ENCODE measurements at regions of chr22 and their contacts with region 1.

Region 1: DNA sequence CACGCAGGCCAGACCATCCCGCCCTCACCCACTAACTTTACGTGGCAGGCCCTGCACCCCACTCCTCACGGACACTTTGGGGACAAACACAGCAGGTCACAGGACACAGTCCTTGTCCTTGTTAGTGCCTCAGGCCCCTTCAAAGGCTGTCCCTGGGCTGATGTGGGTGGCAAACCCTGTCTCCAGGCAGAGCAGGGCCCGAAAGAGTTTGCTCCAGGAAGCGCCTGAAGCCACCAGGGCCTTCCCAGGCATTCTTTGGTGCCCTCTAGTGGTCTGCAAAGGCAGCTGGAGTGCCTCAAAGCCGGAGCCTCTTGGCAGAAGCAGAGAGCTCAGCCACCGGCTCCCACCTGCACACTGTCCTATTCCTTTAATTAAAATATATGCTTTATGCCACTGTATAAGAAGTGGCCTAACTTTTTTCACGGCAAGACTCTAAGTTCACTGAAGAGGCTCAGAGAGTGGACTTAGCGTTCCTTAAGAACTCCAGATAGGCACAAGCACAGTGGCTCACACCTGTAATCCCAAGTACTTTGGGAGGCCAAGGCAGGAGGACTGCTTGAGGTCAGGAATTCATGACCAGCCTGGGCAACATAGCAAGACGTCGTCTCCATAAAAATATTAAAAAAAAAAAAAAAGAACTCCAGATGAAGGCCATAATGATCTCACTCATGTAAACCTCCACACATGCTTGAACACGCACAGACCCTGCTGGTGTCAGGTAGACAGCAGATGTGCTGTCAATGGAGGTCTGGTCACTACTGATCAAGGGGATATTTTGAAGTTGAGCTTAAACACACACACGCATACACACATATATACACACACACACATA is 11.1 kb downstream of the TXN2 start:
- DNase-seq: peak; percentile 86
- CTCF ChIP-seq: peak; percentile 95

Region 2: GRCh38 chr22:36291831-36292740 is 178.3 kb before region 1 on chr22:
- CTCF ChIA-PET with region 1: interaction called, 233 read pairs
- POLR2A ChIA-PET with region 1: no interaction called
- DNase-seq: no peak
- CTCF ChIP-seq: no peak

Region 3: DNA sequence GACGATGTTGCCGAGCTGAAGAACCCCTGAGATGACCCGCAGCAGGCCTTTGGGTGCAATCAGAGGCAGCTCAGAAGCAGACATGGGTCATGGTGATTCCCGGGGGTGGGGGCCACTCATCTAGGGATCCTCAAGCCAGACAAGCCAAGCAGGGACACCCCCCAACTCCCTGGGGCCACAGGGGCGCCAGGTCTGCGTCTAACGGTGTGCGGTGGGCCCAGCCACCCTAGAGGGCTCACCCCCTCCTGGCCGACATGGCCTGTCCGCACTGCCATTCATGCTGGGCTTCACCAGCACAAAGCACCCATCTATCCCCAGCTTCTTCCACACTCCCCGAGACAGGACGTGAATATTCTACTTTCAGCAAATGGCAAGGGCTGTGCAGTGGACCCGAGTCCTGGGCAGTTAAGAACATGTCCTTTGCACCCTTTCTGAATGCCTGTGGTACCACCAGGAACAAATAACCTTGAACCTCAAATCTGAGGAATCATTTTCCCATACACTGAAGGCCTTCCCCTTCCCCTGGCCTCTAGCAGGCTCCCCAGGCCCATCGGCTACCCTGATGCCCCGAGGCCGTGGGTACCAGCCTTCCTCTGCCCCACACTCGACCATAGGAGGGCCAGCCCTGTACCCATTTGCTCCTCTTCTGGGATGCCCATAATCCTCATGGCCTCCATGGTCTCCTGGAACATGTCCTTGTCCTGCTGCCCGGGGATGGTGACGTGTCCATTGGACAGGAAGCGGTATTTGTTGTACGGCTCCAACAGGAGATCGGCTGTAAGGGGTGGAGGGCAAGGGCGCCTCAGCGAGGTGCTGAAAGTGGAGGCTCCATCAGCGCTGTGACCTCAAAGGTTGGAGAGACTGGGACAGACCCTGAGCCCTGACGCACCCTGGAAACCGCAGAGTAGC is 150.5 kb before region 1 on chr22:
- CTCF ChIA-PET with region 1: interaction called, 12 read pairs
- POLR2A ChIA-PET with region 1: no interaction called
- DNase-seq: no peak
- CTCF ChIP-seq: no peak

Region 4: DNA sequence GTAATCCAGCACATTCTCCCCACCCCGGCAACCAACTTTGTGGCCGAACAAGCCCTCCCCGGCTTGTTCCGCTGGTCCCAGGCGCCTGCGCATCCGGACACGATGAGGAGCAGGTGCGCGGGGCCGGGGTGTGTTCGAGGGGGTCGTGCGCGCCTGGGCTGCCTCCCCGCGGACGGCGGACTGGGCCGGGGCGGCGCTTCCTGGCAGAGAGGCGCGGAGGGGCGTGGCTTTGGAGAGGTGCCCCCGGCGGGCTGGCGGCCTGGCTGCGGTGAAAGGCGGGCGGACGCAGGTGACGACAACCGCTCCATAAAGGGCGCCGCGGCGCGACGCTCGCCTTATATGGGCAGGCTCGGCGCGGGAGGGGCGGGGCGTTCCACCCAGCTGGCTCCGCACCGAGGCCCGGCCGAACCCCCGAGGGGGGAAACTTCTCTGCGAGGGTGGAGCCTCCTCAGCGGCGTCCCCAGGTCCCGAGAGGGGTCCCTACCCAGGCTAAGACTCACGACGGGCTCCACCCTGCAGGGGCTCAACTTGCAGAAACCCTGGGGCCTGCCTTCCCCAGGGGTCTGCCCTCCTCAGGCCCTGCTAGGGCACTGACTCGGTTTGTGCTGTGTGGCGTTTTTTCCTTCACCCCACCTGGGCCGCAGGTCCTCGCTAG is 15.3 kb before region 1 on chr22:
- CTCF ChIA-PET with region 1: interaction called, 21 read pairs
- POLR2A ChIA-PET with region 1: interaction called, 3 read pairs
- DNase-seq: peak; percentile 90
- CTCF ChIP-seq: peak; percentile 16

Region 5: GRCh38 chr22:36493690-36494110 is 23.3 kb after region 1 on chr22:
- CTCF ChIA-PET with region 1: interaction called, 13 read pairs
- POLR2A ChIA-PET with region 1: no interaction called
- DNase-seq: peak; percentile 77
- CTCF ChIP-seq: no peak

Region 6: DNA sequence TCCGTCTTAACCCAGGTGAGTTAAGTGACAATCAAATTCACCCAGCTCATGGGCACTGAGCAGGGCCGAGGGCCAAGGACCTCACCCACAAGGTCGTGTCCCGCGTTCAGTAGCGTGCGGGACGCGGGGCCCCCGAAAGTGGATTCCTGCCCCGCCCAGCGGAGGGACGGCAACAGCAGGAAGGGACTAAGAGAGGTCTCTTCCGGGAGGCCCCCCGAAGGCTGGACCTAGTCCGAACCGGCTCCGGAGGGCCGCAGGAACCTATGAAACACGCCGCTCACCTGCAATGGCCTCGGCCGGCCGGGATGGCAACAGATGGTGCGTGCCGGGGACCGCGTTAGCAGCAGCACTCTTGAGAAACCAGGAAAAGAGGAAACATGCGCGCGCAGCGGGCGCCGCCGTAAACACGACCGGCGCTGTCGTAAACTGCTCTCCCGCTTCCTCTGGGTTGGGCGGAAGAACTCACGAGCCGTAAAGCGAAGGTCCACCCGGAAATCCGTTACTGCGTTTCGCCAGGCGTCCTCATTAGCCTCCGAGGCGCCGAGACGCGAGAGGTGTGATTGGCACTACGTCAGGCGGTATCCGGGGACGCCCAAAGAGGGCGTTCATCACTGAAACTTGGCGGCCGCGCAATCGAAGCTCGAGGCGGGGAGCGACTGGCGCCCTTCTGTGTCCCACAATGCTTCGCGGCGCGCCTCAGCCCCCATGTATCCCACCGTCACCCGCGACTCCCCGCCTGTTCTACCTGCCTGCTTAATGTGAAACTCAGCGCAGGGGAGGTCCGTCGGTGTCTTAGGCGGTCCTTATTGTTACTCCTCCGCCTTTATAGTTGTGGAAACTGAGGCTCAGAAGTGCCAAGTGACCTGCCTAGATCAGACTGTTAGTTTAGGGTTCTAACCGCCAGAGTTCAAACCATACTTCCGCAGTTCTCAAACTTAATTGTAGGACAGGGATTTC is 58.7 kb after region 1 on chr22 and contains the start of gene EIF3D:
- CTCF ChIA-PET with region 1: no interaction called
- POLR2A ChIA-PET with region 1: no interaction called
- DNase-seq: peak; percentile 94
- CTCF ChIP-seq: peak; percentile 1

Measured in GM10248 (cell line).